Mammary epithelial cell (primary cell): ENCODE measurements at regions of chr19 and their contacts with region 1.

Region 1: DNA sequence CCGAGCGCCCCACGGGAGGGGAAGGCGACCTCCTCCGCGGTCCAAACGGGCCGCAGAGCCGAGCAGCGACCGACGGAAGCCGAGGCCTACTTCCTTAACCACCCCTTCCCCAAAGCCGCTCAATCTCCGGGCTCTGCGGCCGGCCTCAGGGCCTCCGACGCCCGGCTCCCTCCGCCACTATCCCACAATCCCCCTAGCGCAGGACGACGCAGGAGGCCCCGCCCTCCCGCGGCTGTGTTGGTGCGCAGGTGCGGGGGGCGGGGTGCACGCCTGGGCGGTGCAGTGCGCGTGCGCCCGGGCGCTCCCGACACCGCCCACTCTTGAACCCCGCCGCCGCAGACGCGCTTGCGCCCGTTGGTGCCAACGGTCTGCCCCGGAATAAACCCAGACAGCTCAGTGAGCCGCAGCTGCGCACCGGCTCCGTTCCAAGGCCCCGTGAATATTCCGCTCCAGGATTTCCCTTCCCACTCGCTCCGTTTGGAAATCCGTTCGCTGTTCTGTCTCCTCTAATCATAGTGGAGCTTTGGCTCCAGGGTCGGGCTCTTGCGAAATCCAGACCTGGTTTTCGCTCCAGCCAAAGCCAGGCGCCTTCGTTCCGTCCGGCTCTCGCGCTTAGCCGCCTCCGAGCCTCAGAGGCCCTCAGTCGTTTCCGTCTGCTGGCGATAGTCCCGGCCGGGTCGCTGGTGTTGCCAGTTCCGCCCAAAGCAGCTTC is at the start of gene PPP6R1:
- DNase-seq: peak; percentile 100
- H3K4me3 ChIP-seq: peak within 1 kb of the TSS; percentile 82 to 95 (median 94)
- H3K27ac ChIP-seq: peak within 1 kb of the TSS; percentile 89
- H3K4me1 ChIP-seq: peaks cover 28% of the 10 kb centered on the region
- H3K27me3 ChIP-seq: no peaks in the 10 kb centered on the region
- CTCF ChIP-seq: peak in 1 of 2 donors; percentile 1
- total RNA-seq, gene PPP6R1: 28.3 to 74.2 TPM

Region 2: DNA sequence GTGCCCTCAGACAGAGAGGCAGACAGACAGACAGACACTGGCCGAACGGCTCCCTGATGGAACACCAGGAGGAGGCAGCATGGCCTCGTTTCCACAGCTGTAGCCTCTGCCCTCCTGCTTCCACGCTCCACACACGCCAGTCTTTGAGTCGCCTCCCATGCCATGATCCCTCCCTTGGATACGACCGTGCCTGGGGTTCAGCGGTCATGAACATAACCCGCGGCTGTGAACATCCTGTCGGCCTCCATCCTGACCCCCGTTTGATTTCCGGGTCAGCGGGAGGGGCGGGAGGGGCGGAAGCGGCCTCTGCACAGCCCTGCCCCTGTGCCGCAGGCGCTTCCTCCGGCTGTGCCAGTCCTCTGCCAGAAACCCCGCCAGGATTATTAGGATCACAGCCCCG is 244.3 kb before region 1 on chr19:
- CTCF ChIA-PET with region 1: no interaction called
- dilution Hi-C with region 1: no loop called
- in situ Hi-C with region 1: no loop called
- intact Hi-C with region 1: no loop called
- DNase-seq: no peak
- H3K4me3 ChIP-seq: no peak overlapping the region
- H3K27ac ChIP-seq: no peak overlapping the region
- H3K4me1 ChIP-seq: no peaks in the 10 kb centered on the region
- H3K27me3 ChIP-seq: no peaks in the 10 kb centered on the region
- CTCF ChIP-seq: no peak

Region 3: GRCh38 chr19:55133639-55134444 is 125.1 kb before region 1 on chr19:
- CTCF ChIA-PET with region 1: no interaction called
- dilution Hi-C with region 1: no loop called
- in situ Hi-C with region 1: no loop called
- intact Hi-C with region 1: no loop called
- DNase-seq: no peak
- H3K4me3 ChIP-seq: no peak overlapping the region
- H3K27ac ChIP-seq: no peak overlapping the region
- H3K4me1 ChIP-seq: no peaks in the 10 kb centered on the region
- H3K27me3 ChIP-seq: no peaks in the 10 kb centered on the region
- CTCF ChIP-seq: no peak

Region 4: DNA sequence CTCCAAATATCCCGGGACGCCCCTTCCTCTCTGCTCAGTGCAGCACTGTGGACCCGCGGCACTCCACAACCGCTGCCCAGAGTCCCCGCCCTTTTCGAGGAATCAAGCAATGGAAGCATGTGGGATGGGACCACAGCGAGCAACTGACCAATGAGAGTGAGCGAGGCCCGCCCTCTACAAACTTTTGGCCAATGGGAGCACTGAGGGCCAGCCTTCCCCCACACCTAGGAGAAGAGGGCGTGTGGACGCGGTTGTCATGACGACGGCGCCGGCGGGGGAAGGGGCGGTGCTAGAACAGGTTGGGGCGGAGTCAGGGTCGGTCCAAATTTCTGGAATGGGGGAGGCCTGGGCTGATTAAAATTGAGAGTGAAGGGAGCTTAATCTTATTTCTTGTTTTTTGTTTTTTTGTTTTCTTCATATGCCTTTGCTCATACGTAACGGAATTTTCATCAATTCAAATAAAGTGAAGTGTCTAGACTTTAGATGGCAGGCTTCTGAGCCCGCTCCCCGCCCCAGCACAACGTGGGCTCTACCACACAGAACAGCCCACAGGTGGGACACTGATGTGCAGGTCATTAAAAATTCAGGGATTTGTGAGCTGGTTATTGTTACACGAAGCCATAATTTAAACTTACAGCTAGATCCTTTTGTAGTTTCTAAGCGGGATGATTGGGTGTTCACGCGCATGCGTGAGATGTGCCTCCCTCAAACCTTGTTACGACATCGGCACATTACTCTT is 92.3 kb before region 1 on chr19 and contains the start of gene DNAAF3:
- CTCF ChIA-PET with region 1: no interaction called
- dilution Hi-C with region 1: loop called (anchors 5 kb)
- in situ Hi-C with region 1: no loop called
- intact Hi-C with region 1: loop called (anchors 1 kb)
- DNase-seq: peak; percentile 97
- H3K4me3 ChIP-seq: peak within 1 kb of the TSS; percentile 49 to 67 (median 61)
- H3K27ac ChIP-seq: peak within 1 kb of the TSS; percentile 69
- H3K4me1 ChIP-seq: peaks cover 9% of the 10 kb centered on the region
- H3K27me3 ChIP-seq: peaks cover 2% of the 10 kb centered on the region
- CTCF ChIP-seq: no peak
- total RNA-seq, gene DNAAF3: 1.5 to 2.2 TPM

Region 5: DNA sequence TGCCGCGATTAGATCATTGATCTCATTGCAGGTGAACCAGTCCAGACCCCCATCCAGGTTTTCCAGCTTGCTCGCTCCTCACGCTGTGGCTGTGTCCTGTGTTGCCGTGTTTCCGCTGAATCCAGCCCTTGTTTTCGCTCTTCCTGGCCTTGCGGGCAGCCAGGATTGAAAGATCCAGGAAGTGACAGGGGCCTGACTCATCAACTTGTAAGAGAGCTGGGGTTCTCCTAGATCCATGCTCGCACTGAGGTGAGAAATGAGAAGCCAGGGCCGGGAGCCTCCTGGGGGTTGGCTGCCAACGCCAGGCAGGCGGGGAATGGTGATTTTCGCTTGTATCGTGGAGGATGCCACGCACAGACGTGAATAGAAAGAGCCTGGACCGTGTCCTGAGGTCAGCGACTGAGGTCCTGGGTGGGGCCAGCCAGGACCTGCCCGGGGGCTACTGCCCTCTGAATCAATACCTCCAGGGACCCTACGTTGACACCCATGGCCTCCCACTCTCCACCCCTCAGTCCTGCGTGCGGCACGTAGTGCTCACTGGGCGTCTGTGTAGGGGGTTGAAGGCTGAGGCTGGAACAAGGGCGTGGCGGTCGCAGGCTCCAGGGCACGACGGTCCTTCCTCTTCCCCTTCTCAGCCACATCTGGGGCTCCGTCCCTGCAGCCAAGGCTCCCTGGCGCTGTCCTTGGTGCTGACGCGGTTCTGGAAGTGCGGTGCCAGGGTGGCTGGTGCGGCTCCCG is 42.4 kb before region 1 on chr19:
- CTCF ChIA-PET with region 1: no interaction called
- dilution Hi-C with region 1: no loop called
- in situ Hi-C with region 1: no loop called
- intact Hi-C with region 1: loop called (anchors 1 kb)
- DNase-seq: peak; percentile 99
- H3K4me3 ChIP-seq: peak overlapping the region; percentile 37 to 64 (median 49)
- H3K27ac ChIP-seq: peak overlapping the region; percentile 70
- H3K4me1 ChIP-seq: peaks cover 9% of the 10 kb centered on the region
- H3K27me3 ChIP-seq: no peaks in the 10 kb centered on the region
- CTCF ChIP-seq: no peak

Region 6: DNA sequence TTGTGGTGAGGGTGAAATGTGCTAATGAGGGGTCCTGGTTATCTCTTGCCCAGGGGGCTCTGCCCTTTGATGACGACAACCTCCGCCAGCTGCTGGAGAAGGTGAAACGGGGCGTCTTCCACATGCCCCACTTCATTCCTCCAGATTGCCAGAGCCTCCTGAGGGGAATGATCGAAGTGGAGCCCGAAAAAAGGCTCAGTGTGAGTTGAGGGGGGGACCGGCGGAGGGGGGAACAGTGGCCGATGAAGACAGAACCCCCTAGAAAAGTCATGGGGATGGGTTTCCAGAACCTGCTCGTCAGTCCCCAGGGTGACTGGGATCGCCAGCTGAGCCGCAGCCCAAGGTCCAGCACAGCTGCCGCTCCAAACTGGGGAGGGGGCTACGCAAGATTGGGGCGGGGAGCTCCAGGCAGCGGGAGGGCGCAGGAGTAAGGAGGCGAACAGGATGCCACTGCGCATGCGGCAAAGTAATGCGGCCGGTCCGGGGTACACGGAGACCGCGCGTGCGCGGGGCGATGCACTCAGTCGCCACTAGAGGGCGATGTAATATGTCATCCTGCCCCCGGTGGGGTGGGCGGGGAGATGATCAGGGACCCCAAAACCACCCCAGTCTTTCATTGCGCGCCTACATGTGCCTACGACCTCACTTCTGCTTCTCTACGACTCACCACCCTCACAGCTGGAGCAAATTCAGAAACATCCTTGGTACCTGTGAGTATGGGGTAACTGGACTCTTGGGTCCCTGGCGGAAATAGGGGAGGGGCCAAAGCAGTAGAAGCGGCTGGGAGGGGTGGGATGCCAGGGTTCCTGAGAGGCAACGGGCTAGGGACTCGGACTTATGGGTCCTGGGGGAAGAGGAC is 42.7 kb after region 1 on chr19:
- CTCF ChIA-PET with region 1: no interaction called
- dilution Hi-C with region 1: loop called (anchors 5 kb)
- in situ Hi-C with region 1: no loop called
- intact Hi-C with region 1: no loop called
- DNase-seq: peak; percentile 52
- H3K4me3 ChIP-seq: peak overlapping the region; percentile 17 to 50 (median 29)
- H3K27ac ChIP-seq: no peak overlapping the region
- H3K4me1 ChIP-seq: no peaks in the 10 kb centered on the region
- H3K27me3 ChIP-seq: no peaks in the 10 kb centered on the region
- CTCF ChIP-seq: peak; percentile 73 to 94

Region 7: GRCh38 chr19:55353803-55354697 is 95.1 kb after region 1 on chr19:
- CTCF ChIA-PET with region 1: no interaction called
- dilution Hi-C with region 1: loop called (anchors 5 kb)
- in situ Hi-C with region 1: no loop called
- intact Hi-C with region 1: no loop called
- DNase-seq: peak; percentile 60
- H3K4me3 ChIP-seq: peak overlapping the region; percentile 47 to 59 (median 48)
- H3K27ac ChIP-seq: no peak overlapping the region
- H3K4me1 ChIP-seq: peaks cover 30% of the 10 kb centered on the region
- H3K27me3 ChIP-seq: no peaks in the 10 kb centered on the region
- CTCF ChIP-seq: no peak

Region 8: DNA sequence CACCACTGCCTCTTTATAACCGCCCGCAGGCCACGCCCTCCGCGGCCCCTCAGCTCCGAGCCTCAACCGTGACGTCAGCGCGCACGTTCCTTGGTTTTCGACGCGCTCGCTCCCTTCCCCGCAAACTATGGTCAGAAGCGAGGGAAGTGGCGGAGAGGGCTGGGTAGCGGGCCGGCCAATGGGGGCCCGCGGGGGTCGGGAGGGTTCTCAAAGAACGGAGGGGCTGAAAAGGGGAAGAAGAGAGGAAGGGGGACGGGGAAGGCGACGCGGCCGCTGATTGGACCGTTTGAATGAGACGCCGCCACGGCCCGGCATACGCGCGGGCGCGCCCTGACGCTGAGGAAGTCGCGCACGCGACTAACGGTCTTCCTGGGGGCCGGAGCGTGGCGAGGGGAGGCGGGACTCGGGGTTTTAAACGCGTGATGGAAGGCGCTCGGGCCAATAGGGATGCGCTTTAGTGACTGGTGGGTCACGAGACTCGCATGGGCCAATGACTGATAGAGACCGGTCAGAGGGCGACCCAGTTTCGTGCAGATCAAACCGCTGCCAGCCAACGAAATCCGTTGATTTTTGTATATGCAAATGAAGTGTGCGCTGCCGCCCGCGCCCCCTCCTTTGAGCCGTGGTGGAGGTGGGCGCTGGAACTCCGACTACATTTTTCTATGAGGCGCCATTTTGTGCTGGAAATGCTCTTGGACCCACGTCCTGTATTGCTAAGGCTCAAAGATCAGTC is 149.0 kb after region 1 on chr19:
- CTCF ChIA-PET with region 1: no interaction called
- dilution Hi-C with region 1: loop called (anchors 5 kb)
- in situ Hi-C with region 1: no loop called
- intact Hi-C with region 1: no loop called
- DNase-seq: peak; percentile 98
- H3K4me3 ChIP-seq: peak overlapping the region; percentile 75 to 94 (median 81)
- H3K27ac ChIP-seq: peak overlapping the region; percentile 94
- H3K4me1 ChIP-seq: peaks cover 29% of the 10 kb centered on the region
- H3K27me3 ChIP-seq: no peaks in the 10 kb centered on the region
- CTCF ChIP-seq: no peak